ENCODE measurements at regions of chr3 and their contacts with region 1.

Region 1: DNA sequence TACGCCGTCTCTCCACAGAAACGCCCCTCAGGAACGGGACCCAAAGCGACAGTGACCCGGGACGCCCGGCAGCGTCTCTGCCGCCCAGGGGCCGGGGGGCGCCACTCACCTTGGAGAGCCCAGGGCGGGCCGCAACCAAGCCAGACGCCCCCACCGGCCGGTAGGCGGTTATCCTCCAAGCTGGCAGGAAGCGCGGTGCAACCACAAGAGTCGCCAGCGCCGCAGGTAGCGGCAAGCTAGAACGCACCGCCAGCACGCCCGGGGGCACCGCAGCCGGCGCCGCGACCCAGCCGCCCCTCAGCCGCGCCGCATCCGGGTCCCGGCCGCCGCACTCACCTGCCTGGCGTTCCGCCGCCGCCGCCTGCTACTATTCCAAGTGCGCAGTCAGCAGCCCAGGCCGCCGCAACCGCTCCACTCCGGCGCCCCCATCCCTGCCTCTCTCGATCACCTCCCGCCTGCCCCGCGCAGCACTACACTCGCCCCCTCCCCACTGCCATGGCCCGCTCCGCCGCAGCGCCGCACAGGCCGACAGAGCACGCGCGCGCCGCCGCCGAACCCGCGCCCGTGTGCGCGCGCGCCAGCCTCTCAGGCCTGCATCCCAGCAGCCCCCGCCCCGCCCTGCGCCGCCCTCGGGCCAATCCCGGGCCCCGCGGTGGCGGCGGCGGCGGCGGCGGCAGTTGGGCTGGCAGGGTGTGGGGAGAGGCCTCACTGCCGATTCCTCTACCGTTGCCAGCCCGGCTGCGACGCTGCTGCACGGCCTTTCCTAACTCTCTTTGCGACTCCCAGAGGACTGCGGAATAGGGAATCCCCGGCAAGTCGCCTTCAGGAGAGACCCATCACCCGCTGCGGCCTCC is at the start of gene PIK3CB:
- DNase-seq: peak; percentile 58 to 96 (median 92)

Region 2: DNA sequence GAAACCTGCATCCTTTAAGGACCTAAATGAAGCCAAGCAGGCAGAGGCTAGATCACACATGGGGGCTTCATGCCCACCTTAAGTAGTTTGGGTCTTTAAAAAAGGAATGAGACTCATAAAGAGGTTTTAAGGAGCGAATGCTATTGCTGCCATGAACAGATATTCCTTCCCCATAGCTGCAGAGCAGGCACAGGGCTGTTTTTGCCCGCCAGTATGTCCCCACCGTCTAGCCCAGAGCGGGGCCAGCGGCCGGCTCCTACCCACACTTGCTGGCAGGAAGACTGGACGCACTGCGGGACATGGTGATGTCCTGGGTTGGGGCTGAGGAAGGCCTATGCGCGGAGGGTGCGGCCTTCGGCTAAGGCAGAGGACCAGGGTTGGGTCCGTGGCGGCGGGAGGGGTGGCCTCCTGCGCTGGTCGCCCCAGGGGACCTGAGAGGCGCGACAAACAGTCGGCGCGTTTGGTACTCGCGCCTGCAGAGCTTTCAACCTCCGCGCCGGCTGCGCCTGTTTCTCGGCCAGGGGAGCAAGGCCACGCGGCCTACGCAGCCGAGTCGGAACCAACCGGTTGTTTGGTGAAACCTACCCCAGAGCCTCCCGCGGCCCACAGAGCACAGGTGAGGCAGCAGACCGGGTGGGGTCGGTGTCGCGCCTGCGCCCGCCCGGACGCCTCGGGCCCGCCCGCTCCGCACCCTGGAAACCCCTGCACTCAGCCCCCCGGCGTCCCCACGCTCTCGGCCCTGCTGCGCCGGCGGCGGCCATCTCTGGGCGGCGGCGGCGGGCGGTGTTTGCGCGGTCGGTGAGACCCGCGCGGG is 226.1 kb before region 1 on chr3 and contains the start of gene FAIM:
- intact Hi-C with region 1: loop called (anchors 5 kb)
- DNase-seq: peak; percentile 29 to 82 (median 68)

Region 3: DNA sequence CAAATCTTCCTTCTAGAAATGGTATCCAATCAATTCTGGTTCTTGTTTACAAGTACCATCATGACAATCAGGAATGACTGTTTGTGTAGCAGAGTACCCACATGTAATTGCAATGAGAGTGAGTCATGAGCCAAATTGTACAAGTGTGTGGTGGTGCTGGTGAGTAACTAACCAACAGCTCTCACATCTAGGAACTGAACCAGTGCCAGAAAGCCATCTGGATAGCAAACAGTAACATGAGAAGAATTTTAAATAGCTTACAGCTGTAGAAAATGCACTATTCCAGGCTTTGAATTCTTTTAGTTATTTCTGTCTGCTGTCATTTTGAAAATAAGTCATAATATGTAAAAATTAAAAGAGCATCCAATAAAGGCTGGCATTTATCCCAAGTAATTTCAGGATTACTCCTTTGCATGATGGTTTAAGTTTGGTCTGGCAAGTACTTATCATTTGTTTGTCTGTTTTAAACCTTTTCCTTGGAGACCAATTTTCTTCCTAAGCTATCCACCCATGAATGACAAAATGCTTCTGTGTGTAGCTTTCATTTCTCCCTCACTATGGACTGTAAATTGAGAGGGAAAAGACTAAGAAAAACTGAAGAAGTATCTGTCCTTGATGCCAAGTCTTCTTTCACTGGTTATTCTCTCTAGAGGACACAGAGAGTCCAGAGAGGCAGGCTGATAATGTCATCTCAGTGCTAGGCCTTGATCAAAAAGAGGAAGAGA is 59.9 kb before region 1 on chr3:
- intact Hi-C with region 1: loop called (anchors 2 kb)
- DNase-seq: peak in 33 of 42 donors; percentile 20 to 93 (median 66)

Region 4: DNA sequence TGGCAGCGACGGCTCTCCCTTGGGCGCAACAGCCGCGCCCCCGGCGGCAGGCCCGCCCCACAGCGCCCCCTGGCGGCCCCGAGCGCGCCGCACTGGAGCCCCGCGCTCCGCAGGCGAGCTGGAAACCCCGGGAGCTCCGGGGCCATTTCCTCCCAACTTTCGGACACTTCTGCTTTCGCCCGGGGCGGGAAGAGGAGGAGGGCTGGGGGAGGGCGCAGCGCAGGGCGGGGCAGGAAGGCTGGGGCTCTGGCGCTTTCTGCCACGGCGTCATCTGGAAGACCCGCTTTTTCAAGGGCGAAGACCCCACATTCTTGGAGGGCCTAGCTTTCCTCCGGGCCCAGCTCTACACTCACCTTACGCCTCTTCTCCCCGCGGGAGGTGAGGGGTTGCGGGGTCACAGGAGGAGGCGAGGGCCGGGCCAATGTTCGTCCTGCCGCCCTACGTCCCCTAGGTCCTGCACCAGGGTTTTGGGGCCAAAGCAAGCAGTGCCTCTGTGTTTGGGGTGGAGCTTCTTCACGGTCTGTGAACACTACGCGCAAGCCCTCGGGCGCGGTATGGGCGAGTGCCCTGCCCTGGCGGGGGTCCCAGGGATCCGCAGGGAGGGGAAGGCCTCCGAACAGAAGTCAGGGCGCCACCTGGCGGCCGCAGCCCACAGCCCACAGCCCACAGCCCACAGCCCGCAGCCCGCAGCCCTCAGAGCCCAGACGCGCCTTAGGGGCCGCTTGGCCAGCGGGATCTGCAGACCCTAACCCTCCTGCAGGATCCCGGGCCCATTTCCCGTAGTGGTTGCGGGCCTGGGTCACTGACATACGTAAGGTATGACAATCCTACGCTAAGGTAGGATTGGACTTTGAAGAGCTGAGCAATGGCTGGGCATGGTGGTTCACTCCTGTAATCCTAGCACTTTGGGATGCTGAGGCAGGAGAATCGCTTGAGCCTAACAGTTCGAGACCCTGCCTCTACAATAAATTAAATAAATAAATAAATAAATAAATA is 81.2 kb after region 1 on chr3:
- intact Hi-C with region 1: loop called (anchors 10 kb)
- DNase-seq: peak; percentile 76 to 95 (median 91)

Measured in head of caudate nucleus (tissue), 42 donors.